ENCODE measurements at regions of chr12 and their contacts with region 1.

Region 1: GRCh38 chr12:53159195-53159839 is 21.2 kb upstream of the ZNF740 start:
- DNase-seq: peak; percentile 95
- ATAC-seq: peak; percentile 95
- H3K4me3 Mint-ChIP-seq: peak overlapping the region; percentile 50
- H3K27ac Mint-ChIP-seq: no peak overlapping the region
- H3K4me1 Mint-ChIP-seq: peaks cover 5% of the 10 kb centered on the region
- H3K27me3 Mint-ChIP-seq: peaks cover 63% of the 10 kb centered on the region
- CTCF ChIP-seq: peak; percentile 97

Region 2: DNA sequence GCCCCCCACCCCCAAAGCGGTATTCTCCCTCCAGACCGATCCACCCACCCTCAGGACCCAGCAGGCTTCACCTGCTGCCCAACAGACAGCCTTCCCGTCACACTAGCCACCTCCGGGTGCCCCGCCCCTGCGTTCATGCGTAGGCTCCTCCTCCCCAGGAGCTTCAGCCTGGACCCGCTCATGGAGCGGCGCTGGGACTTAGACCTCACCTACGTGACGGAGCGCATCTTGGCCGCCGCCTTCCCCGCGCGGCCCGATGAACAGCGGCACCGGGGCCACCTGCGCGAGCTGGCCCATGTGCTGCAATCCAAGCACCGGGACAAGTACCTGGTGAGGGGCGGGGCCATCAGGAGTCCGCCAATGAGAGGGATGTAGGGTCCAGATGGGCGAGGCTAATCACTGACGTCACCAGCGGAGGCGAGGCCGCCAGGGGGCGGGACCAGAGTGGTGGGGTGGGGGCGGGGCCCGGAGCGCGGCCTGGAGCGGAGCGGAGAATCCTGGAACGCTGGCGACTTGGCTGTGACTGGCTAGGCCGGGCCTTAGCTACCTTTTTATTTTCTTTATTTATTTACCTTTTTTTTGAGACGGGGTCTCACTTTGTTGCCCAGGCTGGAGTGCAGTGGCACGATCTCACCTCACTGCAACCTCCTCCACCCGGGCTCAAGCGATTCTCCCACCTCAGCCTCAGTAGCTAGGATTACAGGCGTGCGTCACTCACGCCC is 105.0 kb before region 1 on chr12:
- CTCF ChIA-PET with region 1: interaction called, 17 read pairs
- POLR2A ChIA-PET with region 1: no interaction called
- DNase-seq: peak; percentile 97
- ATAC-seq: peak; percentile 75
- H3K4me3 Mint-ChIP-seq: peak overlapping the region; percentile 94
- H3K27ac Mint-ChIP-seq: peak overlapping the region; percentile 98
- H3K4me1 Mint-ChIP-seq: peaks cover 31% of the 10 kb centered on the region
- H3K27me3 Mint-ChIP-seq: peaks cover 40% of the 10 kb centered on the region
- CTCF ChIP-seq: no peak

Region 3: GRCh38 chr12:53098982-53099651 is 60.2 kb before region 1 on chr12:
- CTCF ChIA-PET with region 1: interaction called, 38 read pairs
- POLR2A ChIA-PET with region 1: no interaction called
- DNase-seq: peak; percentile 92
- ATAC-seq: peak; percentile 16
- H3K4me3 Mint-ChIP-seq: peak overlapping the region; percentile 90
- H3K27ac Mint-ChIP-seq: no peak overlapping the region
- H3K4me1 Mint-ChIP-seq: peaks cover 30% of the 10 kb centered on the region
- H3K27me3 Mint-ChIP-seq: peaks cover 54% of the 10 kb centered on the region
- CTCF ChIP-seq: peak; percentile 96

Region 4: DNA sequence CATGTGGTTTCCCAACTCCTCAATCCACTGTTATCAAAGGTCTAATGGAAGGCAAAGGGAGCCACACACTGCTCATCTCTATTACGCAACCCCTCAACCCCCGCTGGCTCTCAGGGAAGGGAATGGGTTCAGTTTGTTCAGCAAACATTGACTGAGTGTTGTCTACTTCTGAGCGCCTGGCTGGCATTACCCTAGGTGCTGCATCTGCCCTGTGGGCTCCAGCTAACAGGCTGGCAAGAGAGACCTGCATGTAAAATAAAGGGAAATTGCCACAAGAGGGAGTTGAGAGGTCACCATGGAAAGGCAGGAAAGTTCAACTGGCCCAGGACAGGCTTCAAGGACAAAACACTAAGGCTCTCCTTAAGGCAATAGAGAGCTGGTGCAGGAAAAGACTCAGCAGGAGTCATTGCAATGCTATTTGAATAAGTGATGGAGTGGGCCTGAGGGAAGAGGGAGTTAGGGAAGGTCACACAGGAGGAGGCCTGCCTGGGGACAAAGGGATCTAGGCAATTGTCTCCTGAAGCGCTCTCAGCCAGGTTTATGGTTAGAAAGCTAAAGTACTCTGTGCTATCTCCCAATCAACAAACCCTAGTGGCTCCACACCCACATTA is 15.7 kb after region 1 on chr12:
- CTCF ChIA-PET with region 1: interaction called, 70 read pairs
- POLR2A ChIA-PET with region 1: interaction called, 3 read pairs
- DNase-seq: peak; percentile 63
- ATAC-seq: peak; percentile 97
- H3K4me3 Mint-ChIP-seq: no peak overlapping the region
- H3K27ac Mint-ChIP-seq: no peak overlapping the region
- H3K4me1 Mint-ChIP-seq: peaks cover 23% of the 10 kb centered on the region
- H3K27me3 Mint-ChIP-seq: peaks cover 100% of the 10 kb centered on the region
- CTCF ChIP-seq: no peak

Region 5: DNA sequence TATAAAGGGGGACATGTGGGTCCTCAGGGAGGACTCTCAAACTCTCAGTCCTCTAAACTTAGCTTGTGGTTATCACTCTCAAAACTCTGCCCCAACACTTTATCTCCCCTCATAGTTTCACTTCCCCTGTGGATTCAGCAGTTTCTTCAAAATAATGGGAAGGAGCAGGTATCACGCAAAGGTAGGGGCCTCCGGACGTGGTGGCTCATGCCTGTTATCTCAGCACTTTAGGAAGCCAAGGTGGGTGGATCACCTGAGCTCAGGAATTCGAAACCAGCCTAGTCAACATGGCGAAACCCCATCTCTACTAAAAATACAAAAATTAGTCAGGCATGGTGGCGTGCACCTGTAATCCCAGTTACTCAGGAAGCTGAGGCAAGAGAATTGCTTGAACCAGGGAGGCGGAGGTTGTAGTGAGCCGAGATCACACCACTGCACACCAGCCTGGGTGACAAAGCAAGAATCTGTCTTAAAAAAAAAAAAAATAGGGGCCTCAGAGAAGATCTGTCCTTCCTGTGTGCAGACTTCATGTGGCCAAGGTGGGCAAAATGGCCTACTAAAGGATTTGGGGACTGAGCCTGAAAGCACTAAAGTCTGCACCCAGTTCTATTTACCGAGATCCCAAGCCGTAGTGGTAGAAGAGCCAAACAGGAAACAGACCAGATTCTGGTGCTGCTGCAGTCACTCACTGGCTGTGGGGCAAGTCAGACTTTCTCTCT is 41.3 kb after region 1 on chr12:
- CTCF ChIA-PET with region 1: interaction called, 106 read pairs
- POLR2A ChIA-PET with region 1: no interaction called
- DNase-seq: no peak
- ATAC-seq: no peak
- H3K4me3 Mint-ChIP-seq: no peak overlapping the region
- H3K27ac Mint-ChIP-seq: no peak overlapping the region
- H3K4me1 Mint-ChIP-seq: no peaks in the 10 kb centered on the region
- H3K27me3 Mint-ChIP-seq: peaks cover 54% of the 10 kb centered on the region
- CTCF ChIP-seq: no peak

Region 6: GRCh38 chr12:53267999-53268647 is 108.8 kb after region 1 on chr12 and contains the start of gene ESPL1:
- CTCF ChIA-PET with region 1: interaction called, 35 read pairs
- POLR2A ChIA-PET with region 1: no interaction called
- DNase-seq: peak; percentile 89
- ATAC-seq: peak; percentile 88
- H3K4me3 Mint-ChIP-seq: peak within 1 kb of the TSS; percentile 100
- H3K27ac Mint-ChIP-seq: peak within 1 kb of the TSS; percentile 86
- H3K4me1 Mint-ChIP-seq: peaks cover 29% of the 10 kb centered on the region
- H3K27me3 Mint-ChIP-seq: no peaks in the 10 kb centered on the region; the same call in 1 of the 2 replicates
- CTCF ChIP-seq: peak; percentile 26; the same call in 1 of the 2 replicates
- total RNA-seq, gene ESPL1: 41.5 to 61.4 TPM (median 48.5 TPM) in 3 replicates

Region 7: GRCh38 chr12:53518381-53518780 is 359.1 kb after region 1 on chr12:
- CTCF ChIA-PET with region 1: no interaction called
- POLR2A ChIA-PET with region 1: no interaction called
- DNase-seq: no peak
- ATAC-seq: no peak
- H3K4me3 Mint-ChIP-seq: no peak overlapping the region
- H3K27ac Mint-ChIP-seq: no peak overlapping the region
- H3K4me1 Mint-ChIP-seq: peaks cover 8% of the 10 kb centered on the region
- H3K27me3 Mint-ChIP-seq: no peaks in the 10 kb centered on the region
- CTCF ChIP-seq: no peak